Left ventricle myocardium superior (tissue), 1 donor: ENCODE measurements at regions of chr5 and their contacts with region 1.

Region 1: DNA sequence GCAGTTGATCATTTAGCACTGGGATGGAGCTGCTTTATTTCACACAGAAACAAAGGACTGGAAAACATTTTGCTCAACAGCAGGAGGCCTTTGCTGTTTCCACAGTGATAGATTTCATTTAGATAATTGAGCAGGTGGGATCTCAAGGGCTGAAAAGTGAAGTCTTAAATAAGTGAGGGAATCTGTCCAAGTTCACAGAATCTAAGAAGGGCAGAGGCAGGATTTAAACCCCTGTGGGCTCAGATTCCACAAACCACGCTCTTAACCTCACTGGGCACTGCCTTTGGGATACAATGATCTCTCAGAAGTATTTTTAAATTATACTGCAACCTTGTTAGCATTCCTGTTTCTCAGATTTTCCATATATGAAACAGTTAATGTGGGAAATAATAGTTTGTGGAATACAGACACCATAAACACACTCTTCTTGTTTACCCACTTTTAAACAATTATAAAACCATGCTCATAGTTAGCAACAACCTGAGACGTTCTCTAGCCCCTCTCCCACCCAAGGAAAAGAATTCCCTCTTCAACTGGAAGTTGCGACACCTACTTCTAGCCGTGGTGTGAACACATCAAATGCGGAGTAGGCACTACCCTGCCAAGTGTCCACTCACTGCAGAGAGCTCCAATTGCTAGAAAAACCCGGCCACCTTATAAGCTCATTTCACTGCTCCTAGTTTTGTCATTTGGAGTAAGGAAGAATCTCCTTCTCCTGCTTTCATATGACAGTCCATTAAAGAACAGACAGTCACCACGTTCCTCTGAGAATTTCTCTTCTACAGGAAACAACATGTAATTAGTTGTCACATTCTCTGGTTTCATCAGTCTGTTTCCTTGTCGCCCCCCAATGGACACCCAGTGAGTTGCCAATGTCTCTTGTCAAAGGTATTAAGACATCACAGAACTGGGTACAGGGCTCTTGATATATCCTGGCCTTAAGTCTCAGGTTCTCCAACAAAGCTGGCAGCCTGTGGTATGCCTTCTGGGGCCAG is 47.4 kb downstream of the PRLR start:
- DNase-seq: peak; percentile 39
- ATAC-seq: peak; percentile 47

Region 2: DNA sequence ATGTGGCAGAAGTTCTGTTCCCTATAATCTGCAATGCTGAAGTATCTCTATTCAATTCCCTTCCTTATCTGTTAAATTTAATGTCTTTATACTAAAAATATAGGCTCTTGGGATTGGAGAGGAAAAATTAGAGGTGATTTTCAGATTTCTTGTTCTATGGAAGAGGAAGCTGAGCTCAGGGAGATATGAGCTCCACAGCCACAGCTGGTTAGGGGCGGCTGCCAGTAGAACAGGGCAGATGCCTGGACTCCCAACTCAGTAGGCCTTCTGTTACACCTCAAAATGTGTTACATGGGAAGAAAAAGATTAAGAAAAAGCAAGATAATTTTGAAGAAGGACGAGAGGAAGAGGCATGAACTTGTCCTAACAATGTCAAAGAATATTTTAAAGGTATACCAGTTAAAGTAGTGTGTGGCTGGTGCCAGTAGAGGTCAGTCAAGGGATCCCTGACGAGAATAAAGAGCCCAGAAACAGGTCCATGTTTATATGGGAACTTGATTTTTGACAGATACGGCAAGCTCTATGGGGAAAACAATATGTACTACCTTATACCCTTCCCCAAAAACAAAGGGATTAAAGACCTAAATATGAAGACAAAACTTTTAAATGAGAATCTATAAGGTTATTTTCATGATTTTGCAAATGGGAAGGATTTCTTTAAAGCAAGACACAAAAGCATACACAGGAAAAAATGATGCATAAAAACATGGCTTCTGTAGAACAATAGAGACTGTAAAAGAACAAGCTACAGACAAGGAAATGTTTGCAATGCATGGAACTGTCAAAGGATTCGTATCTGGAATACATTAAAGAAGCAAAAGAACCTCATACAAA is 224.8 kb before region 1 on chr5:
- intact Hi-C with region 1: loop called (anchors 5 kb)
- DNase-seq: no peak
- ATAC-seq: peak; percentile 56

Region 3: GRCh38 chr5:35089334-35090314 is 93.2 kb before region 1 on chr5:
- intact Hi-C with region 1: loop called (anchors 10 kb)
- DNase-seq: no peak
- ATAC-seq: no peak